Activated CD8-positive, alpha-beta T cell treated with anti-CD3 and anti-CD28 coated beads for 36 hours (primary cell): ENCODE measurements at regions of chr5 and their contacts with region 1.

Region 1: DNA sequence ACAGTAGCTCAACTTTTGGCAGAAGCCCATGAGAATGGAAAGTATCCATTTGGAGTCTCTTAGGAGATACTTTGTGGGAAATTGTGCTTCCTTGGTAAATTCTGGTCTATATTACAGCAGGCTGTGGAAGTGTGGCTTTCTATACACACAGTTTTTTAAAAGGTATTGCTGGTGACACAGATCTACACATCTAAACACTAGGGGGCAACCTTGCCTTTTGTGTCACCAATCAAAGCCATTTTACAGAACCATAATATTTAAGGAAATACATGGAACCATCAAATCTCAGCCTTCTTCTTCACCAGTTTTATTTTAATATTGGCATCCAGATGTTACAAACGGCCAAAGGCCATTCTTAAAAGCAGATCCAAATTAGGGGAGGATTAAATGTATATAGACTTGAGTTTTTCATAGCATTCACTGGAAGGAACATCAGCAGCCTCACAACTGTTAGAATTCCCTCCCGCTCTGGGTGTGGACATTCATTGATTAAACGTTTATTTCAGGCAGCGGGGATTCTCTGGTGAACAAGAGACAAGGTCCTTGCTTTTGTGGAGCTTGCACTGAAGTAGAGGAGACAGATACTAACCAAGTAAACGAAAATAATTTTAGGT is 132.4 kb upstream of the EPB41L4A start:
- DNase-seq: peak; percentile 35
- ATAC-seq: peak; percentile 49
- H3K4me3 Mint-ChIP-seq: no peak overlapping the region
- H3K27ac Mint-ChIP-seq: no peak overlapping the region
- H3K4me1 Mint-ChIP-seq: peaks cover 2% of the 10 kb centered on the region
- H3K27me3 Mint-ChIP-seq: peaks cover 4% of the 10 kb centered on the region
- CTCF ChIP-seq: peak; percentile 83

Region 2: DNA sequence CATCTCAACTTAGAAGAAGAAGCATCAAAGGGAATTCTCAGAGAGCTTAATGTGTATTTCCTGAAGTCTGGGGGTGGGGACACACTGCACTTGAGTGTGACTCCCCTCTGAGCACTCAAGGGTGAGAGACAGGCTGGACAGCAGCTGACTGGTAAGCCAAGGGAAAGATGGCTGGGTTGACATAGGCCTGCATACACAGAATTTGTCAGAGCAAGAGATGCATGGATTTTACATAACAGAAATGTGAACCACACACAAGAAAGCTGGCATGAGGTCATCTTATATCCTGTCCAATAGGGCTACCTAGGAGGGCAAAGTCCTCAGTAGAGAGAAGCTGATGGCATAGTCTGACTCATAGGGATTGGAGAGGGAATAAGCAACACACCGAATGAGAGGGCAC is 18.2 kb before region 1 on chr5:
- CTCF ChIA-PET with region 1: interaction called, 16 read pairs
- POLR2A ChIA-PET with region 1: no interaction called
- intact Hi-C with region 1: no loop called
- DNase-seq: no peak
- ATAC-seq: no peak
- H3K4me3 Mint-ChIP-seq: no peak overlapping the region
- H3K27ac Mint-ChIP-seq: no peak overlapping the region
- H3K4me1 Mint-ChIP-seq: peaks cover 2% of the 10 kb centered on the region
- H3K27me3 Mint-ChIP-seq: peaks cover 2% of the 10 kb centered on the region
- CTCF ChIP-seq: no peak

Region 3: DNA sequence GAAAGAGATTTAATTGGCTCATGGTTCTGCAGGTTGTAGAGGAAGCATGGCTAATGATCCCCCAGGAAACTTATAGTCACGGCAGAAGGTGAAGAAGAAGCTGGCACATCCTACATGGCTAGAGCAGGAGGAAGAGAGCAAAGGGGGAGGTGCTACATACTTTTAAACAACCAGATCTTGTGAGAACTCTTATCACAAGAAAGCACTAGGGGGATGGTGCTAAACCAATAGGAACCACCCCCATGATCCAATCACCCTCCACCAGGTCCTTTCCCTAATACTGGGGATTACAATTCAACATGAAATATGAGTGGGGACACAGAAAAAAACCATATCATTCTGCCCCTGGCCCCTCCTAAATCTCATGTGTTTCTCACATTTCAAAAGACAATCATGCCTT is 14.7 kb after region 1 on chr5:
- CTCF ChIA-PET with region 1: no interaction called
- POLR2A ChIA-PET with region 1: no interaction called
- intact Hi-C with region 1: no loop called
- DNase-seq: no peak
- ATAC-seq: no peak
- H3K4me3 Mint-ChIP-seq: no peak overlapping the region
- H3K27ac Mint-ChIP-seq: no peak overlapping the region
- H3K4me1 Mint-ChIP-seq: no peaks in the 10 kb centered on the region
- H3K27me3 Mint-ChIP-seq: peaks cover 5% of the 10 kb centered on the region
- CTCF ChIP-seq: no peak

Region 4: GRCh38 chr5:112628219-112628980 is 76.9 kb after region 1 on chr5:
- CTCF ChIA-PET with region 1: no interaction called
- POLR2A ChIA-PET with region 1: no interaction called
- intact Hi-C with region 1: no loop called
- DNase-seq: no peak
- ATAC-seq: no peak
- H3K4me3 Mint-ChIP-seq: no peak overlapping the region
- H3K27ac Mint-ChIP-seq: no peak overlapping the region
- H3K4me1 Mint-ChIP-seq: no peaks in the 10 kb centered on the region
- H3K27me3 Mint-ChIP-seq: peaks cover 23% of the 10 kb centered on the region
- CTCF ChIP-seq: no peak

Region 5: GRCh38 chr5:112848116-112848811 is 296.7 kb after region 1 on chr5:
- CTCF ChIA-PET with region 1: interaction called, 6 read pairs
- POLR2A ChIA-PET with region 1: no interaction called
- intact Hi-C with region 1: loop called (anchors 5 kb)
- DNase-seq: peak; percentile 22
- ATAC-seq: peak; percentile 100
- H3K4me3 Mint-ChIP-seq: no peak overlapping the region
- H3K27ac Mint-ChIP-seq: peak overlapping the region; percentile 6
- H3K4me1 Mint-ChIP-seq: peaks cover 4% of the 10 kb centered on the region
- H3K27me3 Mint-ChIP-seq: peaks cover 3% of the 10 kb centered on the region
- CTCF ChIP-seq: peak; percentile 71